ENCODE measurements at regions of chr18 and their contacts with region 1.

Region 1: GRCh38 chr18:34322365-34323289 is 97.9 kb upstream of the NOL4 start:
- DNase-seq: no peak
- ATAC-seq: no peak
- H3K4me3 ChIP-seq: no peak overlapping the region
- H3K4me3 Mint-ChIP-seq: no peak overlapping the region
- H3K27ac ChIP-seq: no peak overlapping the region
- H3K27ac Mint-ChIP-seq: no peak overlapping the region
- H3K4me1 ChIP-seq: no peaks in the 10 kb centered on the region
- H3K4me1 Mint-ChIP-seq: no peaks in the 10 kb centered on the region
- H3K27me3 ChIP-seq: no peaks in the 10 kb centered on the region
- H3K27me3 Mint-ChIP-seq: no peaks in the 10 kb centered on the region

Region 2: DNA sequence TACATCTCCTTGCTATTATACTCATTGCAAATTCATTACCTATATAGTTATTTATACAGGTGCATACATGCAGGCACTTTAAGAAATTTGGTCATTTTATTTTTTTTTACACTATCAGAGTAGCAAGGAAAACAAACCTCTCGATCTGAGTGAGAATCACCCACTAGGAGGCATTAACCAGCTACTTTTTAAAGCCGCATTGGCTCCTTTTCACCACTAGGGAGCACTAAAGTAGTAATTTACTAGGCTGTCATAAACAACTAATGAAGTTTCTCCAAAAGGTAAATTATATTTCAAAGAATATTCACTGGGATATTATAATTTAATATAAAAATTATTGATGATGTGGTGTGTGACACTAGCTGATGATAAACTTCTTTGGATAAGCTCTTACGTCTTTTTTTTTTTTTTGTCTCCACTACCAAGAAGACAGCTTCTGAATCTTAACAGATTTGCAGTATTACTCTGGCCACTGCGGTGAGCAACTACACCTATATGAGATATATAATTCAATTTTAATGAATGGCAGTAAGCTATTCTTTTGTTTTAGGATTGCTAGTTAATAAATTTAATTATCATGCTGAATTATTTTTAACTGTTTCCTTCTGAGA is 199.8 kb before region 1 on chr18:
- CTCF ChIA-PET with region 1: no interaction called
- POLR2A ChIA-PET with region 1: no interaction called
- intact Hi-C with region 1: loop called in 1 of 2 experiments (anchors 10 kb)
- DNase-seq: peak in 1 of 9 donors; percentile 1
- ATAC-seq: no peak
- H3K4me3 ChIP-seq: no peak overlapping the region
- H3K4me3 Mint-ChIP-seq: no peak overlapping the region
- H3K27ac ChIP-seq: no peak overlapping the region
- H3K27ac Mint-ChIP-seq: no peak overlapping the region
- H3K4me1 ChIP-seq: no peaks in the 10 kb centered on the region
- H3K4me1 Mint-ChIP-seq: no peaks in the 10 kb centered on the region
- H3K27me3 ChIP-seq: no peaks in the 10 kb centered on the region
- H3K27me3 Mint-ChIP-seq: peaks cover 0 to 4% (median 0%) of the 10 kb centered on the region in 5 donors

Region 3: DNA sequence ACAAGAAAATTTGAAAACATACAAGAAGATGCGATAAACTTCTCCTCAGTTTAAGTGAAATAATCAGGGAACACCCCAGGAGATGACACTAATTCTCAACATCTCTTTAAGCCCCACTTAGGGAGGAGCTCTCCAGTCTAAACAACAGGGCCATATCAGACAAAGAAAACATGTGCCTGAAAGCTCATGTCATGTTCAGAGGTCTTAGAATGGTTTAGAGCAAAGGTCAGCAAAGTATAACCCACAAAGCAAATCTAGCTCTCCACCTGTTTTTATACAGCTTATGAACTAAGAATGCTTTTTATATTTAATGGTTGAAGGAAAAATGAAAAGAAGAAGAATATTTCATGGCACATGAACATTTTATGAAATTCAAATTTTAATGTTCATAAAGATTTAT is 57.7 kb after region 1 on chr18:
- CTCF ChIA-PET with region 1: no interaction called
- POLR2A ChIA-PET with region 1: no interaction called
- intact Hi-C with region 1: loop called in 1 of 2 experiments (anchors 10 kb)
- DNase-seq: no peak
- ATAC-seq: no peak
- H3K4me3 ChIP-seq: no peak overlapping the region
- H3K4me3 Mint-ChIP-seq: no peak overlapping the region
- H3K27ac ChIP-seq: no peak overlapping the region
- H3K27ac Mint-ChIP-seq: no peak overlapping the region
- H3K4me1 ChIP-seq: no peaks in the 10 kb centered on the region
- H3K4me1 Mint-ChIP-seq: no peaks in the 10 kb centered on the region
- H3K27me3 ChIP-seq: no peaks in the 10 kb centered on the region
- H3K27me3 Mint-ChIP-seq: no peaks in the 10 kb centered on the region

Measured in naive thymus-derived CD4-positive, alpha-beta T cell (primary cell).